ENCODE measurements at regions of chr12 and their contacts with region 1.

Region 1: DNA sequence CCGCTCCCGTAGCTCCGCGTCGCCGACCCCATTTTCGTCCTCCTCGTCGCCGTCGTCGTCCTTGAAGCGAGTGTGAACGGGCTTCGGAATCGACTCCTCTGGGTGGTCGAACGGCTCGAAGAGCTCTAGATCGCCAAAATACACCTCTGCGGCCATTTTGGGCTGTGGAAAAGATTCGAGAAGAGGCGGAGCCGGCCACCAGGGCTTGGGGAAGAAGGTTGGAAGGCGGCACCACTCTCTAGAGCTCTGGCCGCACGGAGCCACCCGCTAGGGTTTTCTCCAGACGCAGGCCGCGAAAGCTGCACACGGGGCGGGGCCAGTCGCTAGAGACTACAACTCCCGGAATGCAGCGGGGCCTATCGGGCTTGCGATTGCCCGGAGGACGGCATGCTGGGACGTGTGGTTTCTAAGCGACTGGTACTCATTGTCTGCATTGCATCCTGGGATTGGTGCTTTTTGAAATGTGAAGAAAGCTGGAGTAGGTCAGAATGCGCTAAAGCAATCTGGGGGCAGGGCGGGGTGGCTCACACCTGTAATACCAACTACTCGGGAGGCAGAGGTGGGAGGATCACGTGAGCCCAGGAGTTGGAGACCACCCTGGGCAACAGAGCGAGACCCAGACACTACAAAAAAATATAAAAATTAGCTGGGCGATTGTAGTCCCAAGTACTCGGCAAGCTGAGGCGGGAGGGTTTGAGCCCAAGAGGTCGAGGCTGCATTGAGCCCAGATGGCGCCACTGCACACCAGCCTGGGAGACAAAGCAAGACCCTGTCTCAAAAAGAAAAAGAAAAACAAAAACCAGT is at the start of gene ZCCHC8:
- DNase-seq: peak; percentile 98
- H3K4me3 ChIP-seq: peak within 1 kb of the TSS; percentile 60 to 99 (median 98)
- H3K27ac ChIP-seq: peak within 1 kb of the TSS; percentile 69
- H3K4me1 ChIP-seq: peaks cover 20% of the 10 kb centered on the region
- H3K27me3 ChIP-seq: no peaks in the 10 kb centered on the region
- CTCF ChIP-seq: no peak
- POLR2A ChIP-seq: peak; percentile 66
- total RNA-seq, gene ZCCHC8: 24.4 and 26.5 TPM in 2 replicates

Region 2: GRCh38 chr12:122399592-122400373 is 101.1 kb before region 1 on chr12:
- CTCF ChIA-PET with region 1: interaction called, 44 read pairs
- POLR2A ChIA-PET with region 1: interaction called, 10 read pairs
- dilution Hi-C with region 1: no loop called
- intact Hi-C with region 1: loop called (anchors 1 kb)
- DNase-seq: peak; percentile 82
- H3K4me3 ChIP-seq: peak overlapping the region in 1 of 3 experiments; percentile 20
- H3K27ac ChIP-seq: peak overlapping the region; percentile 94
- H3K4me1 ChIP-seq: peaks cover 21% of the 10 kb centered on the region
- H3K27me3 ChIP-seq: no peaks in the 10 kb centered on the region
- CTCF ChIP-seq: peak; percentile 62 to 67
- POLR2A ChIP-seq: peak; percentile 10

Region 3: GRCh38 chr12:122421821-122422729 is 78.8 kb before region 1 on chr12 and contains the start of gene CLIP1:
- CTCF ChIA-PET with region 1: no interaction called
- POLR2A ChIA-PET with region 1: no interaction called
- dilution Hi-C with region 1: no loop called
- intact Hi-C with region 1: loop called (anchors 2 kb)
- DNase-seq: peak; percentile 63
- H3K4me3 ChIP-seq: peak within 1 kb of the TSS; percentile 47 to 82 (median 82)
- H3K27ac ChIP-seq: peak within 1 kb of the TSS; percentile 81
- H3K4me1 ChIP-seq: peaks cover 49% of the 10 kb centered on the region
- H3K27me3 ChIP-seq: no peaks in the 10 kb centered on the region
- CTCF ChIP-seq: peak; percentile 9 to 54
- POLR2A ChIP-seq: peak; percentile 54
- total RNA-seq, gene CLIP1: 71.0 and 84.3 TPM in 2 replicates

Region 4: GRCh38 chr12:122517877-122518276 is 17.0 kb after region 1 on chr12:
- CTCF ChIA-PET with region 1: interaction called, 4 read pairs
- POLR2A ChIA-PET with region 1: interaction called, 6 read pairs
- dilution Hi-C with region 1: no loop called
- intact Hi-C with region 1: loop called (anchors 2 kb)
- DNase-seq: no peak
- H3K4me3 ChIP-seq: no peak overlapping the region
- H3K27ac ChIP-seq: no peak overlapping the region
- H3K4me1 ChIP-seq: peaks cover under 1% of the 10 kb centered on the region
- H3K27me3 ChIP-seq: no peaks in the 10 kb centered on the region
- CTCF ChIP-seq: no peak
- POLR2A ChIP-seq: no peak

Region 5: GRCh38 chr12:122526683-122527477 is 26.0 kb after region 1 on chr12 and contains the starts of genes KNTC1 and RSRC2:
- CTCF ChIA-PET with region 1: interaction called, 5 read pairs
- POLR2A ChIA-PET with region 1: interaction called, 13 read pairs
- dilution Hi-C with region 1: no loop called
- intact Hi-C with region 1: loop called (anchors 2 kb)
- DNase-seq: peak; percentile 100
- H3K4me3 ChIP-seq: peak within 1 kb of the TSS; percentile 87 to 100 (median 90)
- H3K27ac ChIP-seq: peak within 1 kb of the TSS; percentile 97
- H3K4me1 ChIP-seq: peaks cover 25% of the 10 kb centered on the region
- H3K27me3 ChIP-seq: no peaks in the 10 kb centered on the region
- CTCF ChIP-seq: no peak
- POLR2A ChIP-seq: peak; percentile 99
- total RNA-seq, gene KNTC1: 47.9 and 52.9 TPM in 2 replicates
- total RNA-seq, gene RSRC2: 78.0 and 81.1 TPM in 2 replicates

Region 6: GRCh38 chr12:122752464-122753318 is 251.8 kb after region 1 on chr12 and contains the start of gene DENR:
- CTCF ChIA-PET with region 1: no interaction called
- POLR2A ChIA-PET with region 1: no interaction called
- dilution Hi-C with region 1: no loop called
- intact Hi-C with region 1: loop called (anchors 1 kb)
- DNase-seq: peak; percentile 98
- H3K4me3 ChIP-seq: peak within 1 kb of the TSS; percentile 66 to 87 (median 77)
- H3K27ac ChIP-seq: peak within 1 kb of the TSS; percentile 74
- H3K4me1 ChIP-seq: peaks cover 11% of the 10 kb centered on the region
- H3K27me3 ChIP-seq: no peaks in the 10 kb centered on the region
- CTCF ChIP-seq: peak; percentile 87 to 90
- POLR2A ChIP-seq: peak; percentile 98
- total RNA-seq, gene DENR: 66.5 and 70.3 TPM in 2 replicates

Measured in endothelial cell of umbilical vein (primary cell).